ENCODE measurements at regions of chr7 and their contacts with region 1.

Region 1: DNA sequence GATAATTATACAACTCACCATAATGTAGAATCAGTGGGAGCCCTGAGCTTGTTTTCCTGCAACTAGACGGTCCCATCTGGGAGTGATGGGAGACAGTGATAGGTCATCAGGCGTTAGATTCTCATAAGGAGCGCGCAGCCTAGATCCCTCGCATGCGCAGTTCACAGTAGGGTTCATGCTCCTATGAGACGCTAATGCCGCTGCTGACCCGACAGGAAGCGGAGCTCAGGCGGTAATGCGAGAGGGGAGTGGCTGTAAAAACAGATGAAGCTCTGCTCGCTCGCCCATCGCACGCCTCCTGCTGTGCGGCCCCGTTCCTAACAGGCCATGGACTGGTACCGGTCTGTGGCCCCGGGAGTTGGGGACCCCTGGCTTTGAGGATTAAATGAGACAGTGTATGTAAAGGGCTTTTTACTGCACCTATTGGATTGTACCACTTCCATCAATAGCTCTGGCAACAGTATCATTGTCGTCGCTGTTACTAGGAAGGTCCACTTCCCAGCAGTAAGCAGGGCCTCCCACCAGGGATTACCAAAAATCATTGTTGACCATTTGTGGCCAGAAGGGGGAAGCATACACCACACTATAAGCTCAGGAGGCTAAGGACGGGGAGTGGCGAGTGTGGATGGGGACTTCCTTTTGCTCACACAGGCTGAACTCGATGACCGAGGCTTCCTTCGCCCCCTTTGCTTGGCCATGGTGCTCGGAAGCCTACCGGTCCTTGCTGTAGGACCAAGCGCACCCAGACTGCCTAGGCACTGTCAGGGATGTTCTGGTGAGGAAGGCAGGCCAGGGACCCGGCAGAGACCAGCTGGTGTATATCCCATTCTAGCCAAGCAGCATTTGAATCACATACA is 26.4 kb downstream of the AKR1B1 start:
- DNase-seq: peak; percentile 79
- H3K4me3 Mint-ChIP-seq: peak overlapping the region; percentile 63
- H3K27ac Mint-ChIP-seq: peak overlapping the region; percentile 87
- H3K4me1 Mint-ChIP-seq: peaks cover 14% of the 10 kb centered on the region
- H3K27me3 Mint-ChIP-seq: peaks cover 7% of the 10 kb centered on the region

Region 2: DNA sequence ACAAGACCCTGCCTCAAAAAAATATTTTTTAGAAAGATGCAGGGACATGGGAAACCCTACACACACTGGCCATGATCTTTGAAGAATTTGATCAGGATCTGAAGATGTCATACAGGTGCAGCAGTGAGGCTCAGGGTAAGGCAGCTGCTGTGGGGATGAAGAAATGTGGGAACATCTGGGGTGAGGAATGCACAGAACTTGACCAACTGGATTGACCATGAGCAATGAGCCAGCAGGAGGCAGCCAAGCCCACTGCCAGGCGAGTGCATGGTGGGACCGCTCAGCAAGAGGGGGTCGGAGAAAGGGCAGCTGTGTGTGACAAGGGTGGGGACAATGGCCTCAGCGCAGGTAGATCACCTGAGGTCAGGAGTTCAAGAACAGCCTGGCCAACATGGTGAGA is 28.8 kb before region 1 on chr7:
- CTCF ChIA-PET with region 1: no interaction called
- DNase-seq: no peak
- H3K4me3 Mint-ChIP-seq: no peak overlapping the region
- H3K27ac Mint-ChIP-seq: no peak overlapping the region
- H3K4me1 Mint-ChIP-seq: no peaks in the 10 kb centered on the region
- H3K27me3 Mint-ChIP-seq: peaks cover 20% of the 10 kb centered on the region

Region 3: DNA sequence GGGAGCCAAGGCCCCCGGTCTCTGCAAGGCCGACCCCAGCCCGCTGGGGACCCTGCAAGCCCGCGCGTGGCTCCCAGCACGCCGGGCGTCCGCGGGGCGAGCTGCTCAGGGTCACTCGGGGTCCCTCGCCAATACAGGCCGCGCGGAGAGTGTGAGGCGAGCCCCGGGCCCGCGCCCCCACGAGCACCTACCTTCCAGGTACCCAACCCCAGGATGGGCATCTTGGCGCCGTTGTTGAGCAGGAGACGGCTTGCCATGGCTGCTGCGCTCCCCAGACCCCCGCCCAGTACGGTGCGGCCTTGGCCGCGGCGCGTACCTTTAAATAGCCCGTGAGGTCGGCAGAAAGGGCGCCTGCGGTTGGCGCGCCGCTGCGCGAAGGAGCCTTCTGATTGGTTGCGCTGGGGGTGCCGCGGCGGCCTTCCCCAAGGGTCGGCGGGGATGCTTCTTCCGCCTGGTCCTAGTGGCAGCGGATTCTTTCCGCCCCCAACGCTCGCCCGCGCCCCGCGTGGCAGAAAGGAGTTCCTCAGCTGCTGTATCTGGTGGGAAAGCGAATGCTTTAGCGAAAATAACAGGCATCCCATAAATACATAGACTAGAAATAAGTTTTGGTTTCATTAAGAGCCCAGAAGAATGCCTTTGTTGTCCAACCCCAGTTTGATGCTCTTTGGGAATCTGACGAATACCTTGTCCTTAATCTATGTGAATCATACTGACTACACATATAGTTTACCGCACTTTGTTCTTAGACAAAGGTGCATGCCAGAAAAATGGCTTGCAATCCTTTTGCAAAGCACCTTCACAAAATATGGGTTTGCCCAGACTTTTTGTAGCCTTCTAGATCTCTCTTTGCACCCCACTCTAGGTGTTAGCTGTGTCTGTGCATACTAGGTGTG is 26.5 kb after region 1 on chr7 and contains the start of gene AKR1B1:
- CTCF ChIA-PET with region 1: interaction called, 20 read pairs
- DNase-seq: peak; percentile 93
- H3K4me3 Mint-ChIP-seq: peak within 1 kb of the TSS; percentile 72
- H3K27ac Mint-ChIP-seq: peak within 1 kb of the TSS; percentile 78
- H3K4me1 Mint-ChIP-seq: peaks cover 50% of the 10 kb centered on the region
- H3K27me3 Mint-ChIP-seq: peaks cover 3% of the 10 kb centered on the region

Region 4: GRCh38 chr7:134480736-134481135 is 48.2 kb after region 1 on chr7:
- CTCF ChIA-PET with region 1: interaction called, 12 read pairs
- DNase-seq: no peak
- H3K4me3 Mint-ChIP-seq: no peak overlapping the region
- H3K27ac Mint-ChIP-seq: no peak overlapping the region
- H3K4me1 Mint-ChIP-seq: no peaks in the 10 kb centered on the region
- H3K27me3 Mint-ChIP-seq: no peaks in the 10 kb centered on the region

Region 5: GRCh38 chr7:134514663-134515062 is 82.1 kb after region 1 on chr7:
- CTCF ChIA-PET with region 1: interaction called, 71 read pairs
- DNase-seq: no peak
- H3K4me3 Mint-ChIP-seq: no peak overlapping the region
- H3K27ac Mint-ChIP-seq: no peak overlapping the region
- H3K4me1 Mint-ChIP-seq: no peaks in the 10 kb centered on the region
- H3K27me3 Mint-ChIP-seq: peaks cover 19% of the 10 kb centered on the region

Region 6: DNA sequence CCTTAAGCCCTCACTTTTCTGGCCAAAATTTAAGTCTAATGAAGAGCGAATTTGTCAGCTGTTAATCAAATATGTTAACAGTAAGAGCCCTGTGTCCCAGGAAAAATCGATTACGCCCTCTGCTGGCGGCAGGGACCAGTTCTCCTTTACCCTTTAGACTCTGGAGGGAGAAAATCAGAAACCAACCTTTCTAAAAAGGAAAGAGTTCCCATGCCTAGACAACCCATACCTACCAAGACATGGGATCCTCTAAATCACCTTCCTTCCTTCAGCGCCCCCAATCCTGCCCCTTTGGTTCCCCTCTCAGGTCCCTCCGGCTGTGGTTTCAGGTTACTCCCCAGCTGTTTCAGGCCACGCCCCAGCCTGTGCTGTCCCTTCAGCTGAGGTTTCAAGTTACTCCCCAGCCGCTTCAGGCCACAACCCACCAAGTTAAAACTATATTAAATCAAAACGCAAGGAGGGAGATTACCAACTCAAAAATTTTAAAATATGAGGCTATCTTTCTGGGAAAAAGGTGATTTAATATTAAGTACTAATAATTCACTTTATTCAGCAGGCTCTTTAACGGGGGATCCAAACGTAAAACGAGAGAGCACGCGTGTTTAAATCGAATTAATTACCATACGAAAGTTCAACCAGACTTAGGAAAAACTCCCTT is 115.0 kb after region 1 on chr7:
- CTCF ChIA-PET with region 1: interaction called, 46 read pairs
- DNase-seq: peak; percentile 76
- H3K4me3 Mint-ChIP-seq: no peak overlapping the region
- H3K27ac Mint-ChIP-seq: no peak overlapping the region
- H3K4me1 Mint-ChIP-seq: peaks cover 5% of the 10 kb centered on the region
- H3K27me3 Mint-ChIP-seq: peaks cover 17% of the 10 kb centered on the region

Region 7: DNA sequence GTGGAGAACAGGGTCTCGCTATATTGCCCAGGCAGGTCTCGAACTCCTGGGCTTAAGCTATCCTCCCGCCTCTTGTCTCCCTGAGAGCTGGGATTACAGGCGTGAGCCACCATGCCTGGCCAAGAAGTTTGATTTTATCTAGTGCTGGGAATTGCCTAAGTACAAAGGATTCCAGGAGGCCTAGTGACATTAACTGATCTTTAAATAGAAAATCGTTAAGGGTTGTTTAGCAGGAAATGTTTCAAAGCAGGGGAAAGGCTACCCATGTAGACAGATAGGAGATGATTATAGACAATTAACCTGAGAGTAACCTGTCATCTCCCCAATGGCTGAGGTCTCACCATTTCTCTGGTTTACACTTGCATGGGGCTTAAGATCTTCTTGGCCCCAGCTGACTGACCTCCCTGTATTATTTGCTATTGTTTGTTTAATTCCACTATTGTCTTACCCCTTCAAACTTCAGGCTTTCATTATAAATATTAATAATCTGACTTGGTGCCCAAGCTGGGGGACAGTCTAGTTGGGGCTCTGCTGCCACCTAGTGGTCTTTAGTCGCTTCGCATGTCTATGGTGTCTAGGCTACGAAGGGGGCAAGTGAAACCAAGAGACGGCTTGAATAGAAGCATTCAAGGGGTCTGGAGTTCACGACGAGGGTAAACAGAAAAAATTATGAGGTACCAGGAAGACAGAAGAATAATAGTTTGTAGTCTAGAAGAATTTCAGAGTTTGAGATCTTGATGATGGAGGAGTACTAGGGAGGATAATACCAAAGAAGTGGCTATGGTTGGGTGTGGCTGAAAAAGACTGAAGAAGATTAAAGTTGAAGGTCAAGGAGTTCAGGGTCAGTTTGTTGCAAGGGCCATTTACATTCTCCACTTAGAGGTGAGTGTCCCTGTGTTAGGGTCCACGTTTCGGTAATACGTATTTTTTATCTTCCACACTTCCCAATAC is 173.7 kb after region 1 on chr7:
- CTCF ChIA-PET with region 1: interaction called, 37 read pairs
- DNase-seq: peak; percentile 70
- H3K4me3 Mint-ChIP-seq: no peak overlapping the region
- H3K27ac Mint-ChIP-seq: no peak overlapping the region
- H3K4me1 Mint-ChIP-seq: peaks cover 4% of the 10 kb centered on the region
- H3K27me3 Mint-ChIP-seq: peaks cover 33% of the 10 kb centered on the region

Region 8: DNA sequence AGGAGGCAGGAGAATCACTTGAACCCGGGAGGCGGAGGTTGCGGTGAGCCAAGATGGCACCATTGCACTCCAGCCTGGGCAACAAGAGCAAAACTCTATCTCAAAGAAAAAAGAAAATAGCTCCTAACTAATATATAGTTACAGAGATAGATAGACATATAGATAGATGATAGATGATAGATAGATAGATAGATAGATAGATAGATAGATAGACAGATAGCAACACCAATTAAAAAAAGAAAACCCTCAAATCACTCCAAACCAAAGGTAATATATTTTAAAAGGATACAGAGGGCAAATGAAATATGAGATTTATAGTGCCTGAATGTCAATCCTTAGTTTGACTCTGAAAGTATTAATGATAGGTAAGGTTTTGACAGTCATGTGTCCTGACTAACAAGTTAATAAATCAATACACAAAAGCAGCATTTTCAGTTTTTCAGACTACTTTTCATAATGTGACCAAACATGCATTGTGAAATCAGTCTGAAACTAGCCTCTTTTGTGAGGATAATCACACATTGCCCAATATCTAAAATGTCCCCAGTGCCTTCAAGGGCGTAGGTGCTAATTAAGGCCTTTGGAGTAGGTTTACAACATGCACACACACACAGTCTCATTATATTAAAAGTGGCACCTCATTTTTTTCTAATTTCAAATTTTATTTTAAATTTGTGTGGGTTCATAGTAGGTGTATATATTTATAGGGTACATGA is 275.3 kb after region 1 on chr7:
- CTCF ChIA-PET with region 1: no interaction called
- DNase-seq: no peak
- H3K4me3 Mint-ChIP-seq: no peak overlapping the region
- H3K27ac Mint-ChIP-seq: no peak overlapping the region
- H3K4me1 Mint-ChIP-seq: peaks cover 24% of the 10 kb centered on the region
- H3K27me3 Mint-ChIP-seq: no peaks in the 10 kb centered on the region